ENCODE measurements at regions of chr11 and their contacts with region 1.

Region 1: GRCh38 chr11:130478204-130478701 is 29.8 kb downstream of the ADAMTS15 start:
- DNase-seq: peak; percentile 95
- ATAC-seq: peak; percentile 80
- H3K4me3 ChIP-seq: no peak overlapping the region
- H3K27ac ChIP-seq: peak overlapping the region; percentile 97
- H3K4me1 ChIP-seq: peaks cover 45% of the 10 kb centered on the region
- H3K27me3 ChIP-seq: no peaks in the 10 kb centered on the region
- CTCF ChIP-seq: no peak
- POLR2A ChIP-seq: no peak
- RAD21 ChIP-seq: peak; percentile 28

Region 2: GRCh38 chr11:130522284-130522961 is 44.2 kb after region 1 on chr11:
- CTCF ChIA-PET with region 1: no interaction called
- POLR2A ChIA-PET with region 1: no interaction called
- dilution Hi-C with region 1: no loop called
- in situ Hi-C with region 1: no loop called
- intact Hi-C with region 1: loop called (anchors 2 kb)
- DNase-seq: peak; percentile 97
- ATAC-seq: peak; percentile 95
- H3K4me3 ChIP-seq: no peak overlapping the region
- H3K27ac ChIP-seq: peak overlapping the region; percentile 95
- H3K4me1 ChIP-seq: peaks cover 20% of the 10 kb centered on the region
- H3K27me3 ChIP-seq: no peaks in the 10 kb centered on the region
- CTCF ChIP-seq: no peak
- POLR2A ChIP-seq: peak; percentile 60
- RAD21 ChIP-seq: no peak; the same call in 1 of the 2 replicates

Region 3: GRCh38 chr11:130601141-130601540 is 122.9 kb after region 1 on chr11:
- CTCF ChIA-PET with region 1: no interaction called
- POLR2A ChIA-PET with region 1: no interaction called
- dilution Hi-C with region 1: no loop called
- in situ Hi-C with region 1: no loop called
- intact Hi-C with region 1: loop called (anchors 5 kb)
- DNase-seq: peak; percentile 90
- ATAC-seq: peak; percentile 98
- H3K4me3 ChIP-seq: no peak overlapping the region
- H3K27ac ChIP-seq: peak overlapping the region; percentile 83
- H3K4me1 ChIP-seq: peaks cover 13% of the 10 kb centered on the region
- H3K27me3 ChIP-seq: no peaks in the 10 kb centered on the region
- CTCF ChIP-seq: no peak
- POLR2A ChIP-seq: no peak
- RAD21 ChIP-seq: peak; percentile 6; the same call in 1 of the 2 replicates

Region 4: DNA sequence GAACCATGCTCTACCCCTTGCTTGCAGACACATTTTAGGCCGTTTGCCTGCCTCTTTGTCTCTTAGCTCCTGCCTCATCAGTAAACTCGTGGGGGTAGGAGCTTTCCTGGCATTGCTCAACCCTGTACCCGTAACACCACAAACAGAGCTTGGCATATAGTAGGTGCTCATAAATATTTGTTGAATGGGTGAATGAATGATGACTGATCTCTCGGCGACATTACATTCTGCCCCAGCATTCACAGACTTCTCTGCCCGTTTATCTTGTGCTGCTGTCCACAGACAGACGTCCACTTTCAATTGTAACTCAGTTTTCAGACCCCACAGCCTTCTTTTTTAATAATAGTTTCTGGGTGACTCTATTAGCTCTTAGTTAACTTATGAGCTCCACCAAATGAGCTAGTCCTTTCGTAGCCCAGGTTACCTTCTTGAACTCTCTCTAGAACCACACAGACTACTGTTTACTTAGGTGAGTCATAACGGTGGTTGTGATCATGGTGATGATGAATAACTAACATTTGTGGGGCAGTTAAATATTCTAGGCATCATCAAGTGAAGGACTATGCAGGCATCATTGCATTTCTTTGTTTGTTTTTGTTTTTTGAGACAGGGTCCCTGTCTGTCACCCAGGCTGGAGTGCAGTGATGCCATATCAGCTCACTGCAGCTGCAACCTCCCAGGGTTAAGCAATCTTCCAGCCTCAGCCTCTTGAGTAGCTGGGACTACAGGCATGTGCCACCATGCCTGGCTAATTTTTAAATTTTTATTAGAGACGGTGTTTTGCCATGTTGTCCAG is 158.7 kb after region 1 on chr11:
- CTCF ChIA-PET with region 1: no interaction called
- POLR2A ChIA-PET with region 1: no interaction called
- dilution Hi-C with region 1: no loop called
- in situ Hi-C with region 1: no loop called
- intact Hi-C with region 1: loop called (anchors 5 kb)
- DNase-seq: peak; percentile 92
- ATAC-seq: peak; percentile 66
- H3K4me3 ChIP-seq: no peak overlapping the region
- H3K27ac ChIP-seq: peak overlapping the region; percentile 79
- H3K4me1 ChIP-seq: peaks cover 30% of the 10 kb centered on the region
- H3K27me3 ChIP-seq: no peaks in the 10 kb centered on the region
- CTCF ChIP-seq: no peak
- POLR2A ChIP-seq: no peak
- RAD21 ChIP-seq: peak; percentile 17; the same call in 1 of the 2 replicates

Region 5: DNA sequence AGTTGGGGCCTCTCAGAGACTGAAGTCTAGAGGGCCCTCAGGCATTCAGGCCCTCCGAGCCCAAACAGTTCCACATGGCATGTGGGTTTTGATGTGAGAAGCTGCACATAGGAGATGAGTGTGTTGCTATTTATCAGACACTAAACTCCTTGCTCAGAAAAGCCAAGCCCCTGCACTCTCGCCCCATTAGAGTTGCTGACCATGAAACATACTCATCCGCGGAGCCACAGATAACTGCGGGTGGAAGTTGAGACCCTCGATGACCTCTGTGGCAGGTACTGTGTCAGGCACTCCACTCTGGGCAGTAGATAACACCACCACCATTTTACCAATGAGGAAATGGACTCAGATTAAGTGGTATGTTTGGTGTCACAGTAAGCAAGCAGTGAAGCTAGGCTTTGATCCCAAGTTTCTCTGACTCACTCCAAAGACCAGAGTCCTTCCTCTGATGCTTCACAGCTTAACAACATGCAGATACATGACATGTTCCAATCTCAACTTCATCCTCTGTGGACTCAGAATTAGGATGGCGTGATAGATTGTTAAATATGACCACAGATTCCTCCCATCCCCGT is 172.3 kb after region 1 on chr11:
- CTCF ChIA-PET with region 1: no interaction called
- POLR2A ChIA-PET with region 1: no interaction called
- dilution Hi-C with region 1: no loop called
- in situ Hi-C with region 1: no loop called
- intact Hi-C with region 1: loop called (anchors 1 kb)
- DNase-seq: peak; percentile 59
- ATAC-seq: no peak
- H3K4me3 ChIP-seq: no peak overlapping the region
- H3K27ac ChIP-seq: no peak overlapping the region
- H3K4me1 ChIP-seq: peaks cover 34% of the 10 kb centered on the region
- H3K27me3 ChIP-seq: no peaks in the 10 kb centered on the region
- CTCF ChIP-seq: no peak
- POLR2A ChIP-seq: no peak
- RAD21 ChIP-seq: no peak

Region 6: DNA sequence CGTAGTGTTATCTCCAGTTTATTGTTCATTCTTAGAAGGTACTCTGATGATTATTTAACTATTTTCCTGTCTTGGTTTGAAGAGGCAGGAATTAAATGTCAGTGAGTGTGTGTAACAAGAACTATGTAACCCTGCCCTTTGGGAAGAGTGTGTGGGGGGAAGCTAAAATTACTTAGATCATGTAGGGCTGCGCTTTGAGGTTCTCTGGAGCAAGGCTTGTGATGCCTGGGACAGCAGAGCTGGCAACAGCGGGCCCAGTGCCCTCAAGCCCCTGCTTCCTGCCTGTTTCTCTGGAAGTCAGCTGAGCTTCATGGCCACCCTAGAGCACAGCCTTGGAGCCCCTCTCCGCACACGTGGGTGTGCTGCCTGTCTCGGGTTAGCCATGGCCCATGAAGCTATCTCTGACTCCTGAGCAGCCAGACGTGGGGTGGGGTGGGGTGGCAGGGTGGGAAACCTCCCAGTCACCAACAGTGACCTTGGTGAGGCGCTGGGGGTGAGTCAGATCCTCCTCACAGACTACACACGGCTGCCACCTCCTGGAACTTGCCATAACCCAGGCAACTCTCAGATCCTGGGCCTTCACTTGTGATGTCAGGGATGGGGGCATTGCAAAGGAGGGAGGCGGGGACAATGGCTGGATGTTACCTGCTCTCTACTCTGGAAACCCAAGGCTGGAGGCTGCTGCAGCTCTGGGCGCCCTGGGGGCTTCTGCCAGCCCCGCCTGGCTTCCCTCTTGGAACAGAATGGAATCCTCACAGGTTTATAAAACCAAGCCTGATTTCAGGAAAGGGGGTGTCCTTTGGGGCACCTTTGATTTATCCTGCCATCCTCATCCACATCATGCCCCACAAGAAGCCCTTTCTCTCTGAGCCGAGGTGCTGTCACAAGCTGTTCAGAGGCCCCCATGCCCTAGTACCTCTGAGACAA is 349.5 kb after region 1 on chr11:
- CTCF ChIA-PET with region 1: interaction called, 3 read pairs
- POLR2A ChIA-PET with region 1: no interaction called
- dilution Hi-C with region 1: no loop called
- in situ Hi-C with region 1: no loop called
- intact Hi-C with region 1: loop called (anchors 1 kb)
- DNase-seq: peak; percentile 82
- ATAC-seq: peak; percentile 97
- H3K4me3 ChIP-seq: no peak overlapping the region
- H3K27ac ChIP-seq: peak overlapping the region; percentile 77
- H3K4me1 ChIP-seq: peaks cover 14% of the 10 kb centered on the region
- H3K27me3 ChIP-seq: peaks cover 6% of the 10 kb centered on the region
- CTCF ChIP-seq: peak; percentile 73
- POLR2A ChIP-seq: no peak
- RAD21 ChIP-seq: peak; percentile 91

Measured in IMR-90 (cell line).